CD8-positive, alpha-beta T cell (primary cell): ENCODE measurements at regions of chr12 and their contacts with region 1.

Region 1: GRCh38 chr12:89671469-89671868 is 37.2 kb downstream of the ATP2B1 start:
- DNase-seq: no peak
- ATAC-seq: no peak
- H3K4me3 ChIP-seq: no peak overlapping the region
- H3K4me3 Mint-ChIP-seq: no peak overlapping the region
- H3K27ac ChIP-seq: no peak overlapping the region
- H3K27ac Mint-ChIP-seq: no peak overlapping the region
- H3K4me1 ChIP-seq: peaks cover 39% of the 10 kb centered on the region
- H3K4me1 Mint-ChIP-seq: peaks cover 88% of the 10 kb centered on the region
- H3K27me3 ChIP-seq: no peaks in the 10 kb centered on the region
- H3K27me3 Mint-ChIP-seq: no peaks in the 10 kb centered on the region
- CTCF ChIP-seq: no peak

Region 2: GRCh38 chr12:89208661-89209096 is 462.8 kb before region 1 on chr12:
- CTCF ChIA-PET with region 1: no interaction called
- POLR2A ChIA-PET with region 1: no interaction called
- intact Hi-C with region 1: no loop called
- DNase-seq: no peak
- ATAC-seq: no peak
- H3K4me3 ChIP-seq: no peak overlapping the region
- H3K4me3 Mint-ChIP-seq: no peak overlapping the region
- H3K27ac ChIP-seq: no peak overlapping the region
- H3K27ac Mint-ChIP-seq: no peak overlapping the region
- H3K4me1 ChIP-seq: no peaks in the 10 kb centered on the region
- H3K4me1 Mint-ChIP-seq: peaks cover 6% of the 10 kb centered on the region
- H3K27me3 ChIP-seq: no peaks in the 10 kb centered on the region
- H3K27me3 Mint-ChIP-seq: no peaks in the 10 kb centered on the region
- CTCF ChIP-seq: no peak

Region 3: GRCh38 chr12:89657066-89657465 is 14.4 kb before region 1 on chr12:
- CTCF ChIA-PET with region 1: interaction called, 3 read pairs
- POLR2A ChIA-PET with region 1: no interaction called
- intact Hi-C with region 1: loop called in 1 of 2 experiments (anchors 2 kb)
- DNase-seq: no peak
- ATAC-seq: no peak
- H3K4me3 ChIP-seq: no peak overlapping the region
- H3K4me3 Mint-ChIP-seq: no peak overlapping the region
- H3K27ac ChIP-seq: no peak overlapping the region
- H3K27ac Mint-ChIP-seq: no peak overlapping the region
- H3K4me1 ChIP-seq: peaks cover 10% of the 10 kb centered on the region
- H3K4me1 Mint-ChIP-seq: peaks cover 59% of the 10 kb centered on the region
- H3K27me3 ChIP-seq: no peaks in the 10 kb centered on the region
- H3K27me3 Mint-ChIP-seq: no peaks in the 10 kb centered on the region
- CTCF ChIP-seq: no peak

Region 4: DNA sequence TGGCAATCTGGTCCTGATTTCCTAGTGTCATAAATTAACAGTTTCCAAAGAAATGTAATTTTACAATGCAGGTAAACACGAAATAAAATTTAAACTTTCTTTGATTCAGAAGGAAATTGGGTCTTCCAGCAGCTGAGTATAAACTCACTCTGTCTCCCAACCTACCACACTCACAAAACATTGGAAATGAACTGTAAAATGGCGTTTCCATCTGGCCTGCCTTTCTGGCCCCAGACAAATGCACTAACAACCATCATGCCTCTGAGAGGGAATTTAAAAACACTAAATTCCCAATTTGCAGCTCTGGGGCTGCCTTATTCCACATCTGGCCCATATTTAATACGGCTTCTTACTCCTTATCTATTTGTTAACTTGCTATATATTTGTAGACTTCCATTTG is 17.8 kb after region 1 on chr12:
- CTCF ChIA-PET with region 1: no interaction called
- POLR2A ChIA-PET with region 1: no interaction called
- intact Hi-C with region 1: loop called in 1 of 2 experiments (anchors 2 kb)
- DNase-seq: no peak
- ATAC-seq: no peak
- H3K4me3 ChIP-seq: no peak overlapping the region
- H3K4me3 Mint-ChIP-seq: no peak overlapping the region
- H3K27ac ChIP-seq: no peak overlapping the region
- H3K27ac Mint-ChIP-seq: no peak overlapping the region
- H3K4me1 ChIP-seq: peaks cover 20% of the 10 kb centered on the region
- H3K4me1 Mint-ChIP-seq: peaks cover 77% of the 10 kb centered on the region
- H3K27me3 ChIP-seq: no peaks in the 10 kb centered on the region
- H3K27me3 Mint-ChIP-seq: no peaks in the 10 kb centered on the region
- CTCF ChIP-seq: no peak

Region 5: GRCh38 chr12:89840162-89840922 is 168.9 kb after region 1 on chr12:
- CTCF ChIA-PET with region 1: no interaction called
- POLR2A ChIA-PET with region 1: no interaction called
- intact Hi-C with region 1: no loop called
- DNase-seq: no peak
- ATAC-seq: no peak
- H3K4me3 ChIP-seq: no peak overlapping the region
- H3K4me3 Mint-ChIP-seq: no peak overlapping the region
- H3K27ac ChIP-seq: no peak overlapping the region
- H3K27ac Mint-ChIP-seq: no peak overlapping the region
- H3K4me1 ChIP-seq: no peaks in the 10 kb centered on the region
- H3K4me1 Mint-ChIP-seq: peaks cover 5% of the 10 kb centered on the region
- H3K27me3 ChIP-seq: no peaks in the 10 kb centered on the region
- H3K27me3 Mint-ChIP-seq: no peaks in the 10 kb centered on the region
- CTCF ChIP-seq: no peak